Left ventricle myocardium inferior (tissue), 1 donor: ENCODE measurements at regions of chr13 and their contacts with region 1.

Region 1: GRCh38 chr13:78121459-78122348 is 203.1 kb upstream of the EDNRB start:
- DNase-seq: peak; percentile 31
- H3K4me3 ChIP-seq: no peak overlapping the region
- H3K27ac ChIP-seq: no peak overlapping the region
- H3K4me1 ChIP-seq: peaks cover 8% of the 10 kb centered on the region
- H3K27me3 ChIP-seq: peaks cover 12% of the 10 kb centered on the region
- CTCF ChIP-seq: peak; percentile 89

Region 2: GRCh38 chr13:77779552-77780272 is 342.0 kb before region 1 on chr13:
- intact Hi-C with region 1: loop called (anchors 2 kb)
- DNase-seq: no peak
- H3K4me3 ChIP-seq: no peak overlapping the region
- H3K27ac ChIP-seq: no peak overlapping the region
- H3K4me1 ChIP-seq: peaks cover 5% of the 10 kb centered on the region
- H3K27me3 ChIP-seq: no peaks in the 10 kb centered on the region
- CTCF ChIP-seq: peak; percentile 79

Region 3: DNA sequence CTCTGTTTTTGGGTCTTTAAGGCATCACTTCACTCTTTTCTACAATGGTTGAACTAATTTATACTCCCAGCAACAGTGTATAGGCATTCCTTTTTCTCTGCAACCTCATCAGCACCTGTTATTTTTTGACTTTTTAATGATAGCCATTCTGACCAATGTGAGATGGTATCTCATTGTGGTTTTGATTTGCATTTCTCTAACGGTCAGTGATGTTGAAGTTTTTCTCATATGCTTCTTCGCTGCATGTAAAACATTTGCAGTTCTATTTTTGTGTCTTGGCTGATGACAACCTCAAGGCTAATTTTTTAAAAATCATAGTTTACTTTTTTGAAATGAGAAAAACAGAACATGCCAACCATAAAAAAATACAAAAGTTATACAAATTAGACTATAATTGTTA is 55.2 kb after region 1 on chr13:
- intact Hi-C with region 1: no loop called
- DNase-seq: no peak
- H3K4me3 ChIP-seq: no peak overlapping the region
- H3K27ac ChIP-seq: no peak overlapping the region
- H3K4me1 ChIP-seq: no peaks in the 10 kb centered on the region
- H3K27me3 ChIP-seq: no peaks in the 10 kb centered on the region
- CTCF ChIP-seq: no peak